Sigmoid colon (tissue), 7 donors: ENCODE measurements at regions of chr10 and their contacts with region 1.

Region 1: DNA sequence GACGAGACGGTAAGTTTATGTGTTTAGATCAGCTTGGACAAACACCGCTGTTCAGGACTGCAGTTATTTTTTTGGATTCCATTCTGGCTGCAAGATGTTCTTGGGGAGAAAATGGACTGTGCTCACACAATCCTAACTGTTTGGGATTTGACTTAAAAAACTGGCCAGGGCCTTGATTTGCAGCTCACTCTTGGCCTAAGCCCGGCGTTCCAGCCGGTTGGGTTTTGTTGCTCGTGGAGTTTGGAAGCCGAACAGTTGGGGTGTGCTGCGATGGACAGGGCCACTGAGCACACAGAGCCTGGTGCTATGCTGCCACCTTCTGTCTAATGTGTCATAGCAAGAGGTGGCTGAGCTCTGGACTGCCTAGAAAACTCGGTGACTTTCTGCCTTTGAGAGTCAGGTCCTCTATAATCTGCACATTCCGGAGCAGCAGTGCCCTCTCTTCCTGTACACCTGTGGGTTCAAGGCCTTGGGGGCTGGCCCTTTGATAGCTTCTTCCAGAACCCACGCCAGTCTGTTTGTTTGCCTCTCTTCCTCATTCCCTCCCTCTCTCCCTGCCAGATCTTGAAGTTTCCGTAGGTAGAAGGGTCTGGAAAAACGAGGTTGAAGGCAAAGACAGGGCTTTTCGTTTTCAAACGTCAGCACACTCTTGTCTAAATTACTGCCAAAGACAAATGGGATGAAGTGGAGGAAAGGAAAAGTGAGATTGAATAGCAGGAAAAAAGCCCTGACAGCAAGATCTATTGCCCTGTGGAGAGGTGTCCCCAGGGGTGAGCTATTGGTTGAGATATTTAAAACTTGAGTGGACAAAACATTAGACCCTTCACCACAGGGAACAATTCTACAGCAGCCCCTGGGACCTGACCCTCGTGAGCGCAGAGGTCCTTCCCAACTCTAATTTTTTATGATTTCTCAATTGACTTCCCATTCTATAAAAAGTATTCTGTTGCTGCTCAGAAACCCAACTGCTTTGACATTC is 167.5 kb upstream of the HABP2 start:
- DNase-seq: peak; percentile 96
- H3K4me3 ChIP-seq: no peak overlapping the region
- H3K27ac ChIP-seq: peak overlapping the region; percentile 11 to 54 (median 42)
- H3K4me1 ChIP-seq: peaks cover 0 to 56% (median 34%) of the 10 kb centered on the region in 4 donors
- H3K27me3 ChIP-seq: no peaks in the 10 kb centered on the region
- CTCF ChIP-seq: peak; percentile 74 to 83 (median 80)
- EP300 ChIP-seq: no peak
- POLR2A ChIP-seq: no peak

Region 2: GRCh38 chr10:112475575-112476218 is 909.6 kb before region 1 on chr10:
- intact Hi-C with region 1: loop called (anchors 5 kb)
- DNase-seq: no peak
- H3K4me3 ChIP-seq: no peak overlapping the region
- H3K27ac ChIP-seq: no peak overlapping the region
- H3K4me1 ChIP-seq: peaks cover 0 to 9% (median 0%) of the 10 kb centered on the region in 4 donors
- H3K27me3 ChIP-seq: no peaks in the 10 kb centered on the region
- CTCF ChIP-seq: peak in 1 of 4 experiments; percentile 14
- EP300 ChIP-seq: no peak
- POLR2A ChIP-seq: no peak

Region 3: DNA sequence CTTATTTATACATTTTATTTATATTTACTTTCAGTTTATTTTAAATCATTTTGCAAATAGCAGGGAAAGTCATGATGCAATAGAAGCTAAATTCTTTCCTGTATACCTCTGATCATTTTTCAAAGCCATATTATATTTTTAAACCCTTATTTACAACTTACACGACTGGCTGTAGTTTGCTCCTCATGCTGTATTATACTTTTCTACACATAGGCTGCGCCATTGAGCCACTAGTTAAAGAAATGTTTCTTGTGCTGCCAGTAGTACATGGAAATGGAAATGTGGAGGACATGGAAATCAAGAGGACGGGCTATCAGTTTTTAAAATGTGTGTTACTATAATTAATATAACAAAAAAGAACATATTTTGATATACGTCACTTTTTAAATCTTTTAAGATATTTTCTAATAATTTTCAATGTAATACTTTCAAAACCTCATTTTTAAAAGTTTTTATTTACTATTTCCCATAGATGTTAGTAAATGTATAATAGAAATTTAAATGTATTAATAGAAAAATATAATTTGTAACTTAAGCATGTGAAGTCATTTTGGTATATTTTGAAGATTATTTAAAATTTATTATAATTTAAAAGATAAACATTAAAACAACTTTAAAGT is 819.8 kb before region 1 on chr10:
- intact Hi-C with region 1: loop called (anchors 5 kb)
- DNase-seq: no peak
- H3K4me3 ChIP-seq: no peak overlapping the region
- H3K27ac ChIP-seq: no peak overlapping the region
- H3K4me1 ChIP-seq: no peaks in the 10 kb centered on the region
- H3K27me3 ChIP-seq: no peaks in the 10 kb centered on the region
- CTCF ChIP-seq: peak; percentile 24 to 73 (median 65)
- EP300 ChIP-seq: no peak
- POLR2A ChIP-seq: no peak

Region 4: GRCh38 chr10:112721080-112721698 is 664.1 kb before region 1 on chr10:
- intact Hi-C with region 1: loop called (anchors 5 kb)
- DNase-seq: no peak
- H3K4me3 ChIP-seq: no peak overlapping the region
- H3K27ac ChIP-seq: no peak overlapping the region
- H3K4me1 ChIP-seq: peaks cover 0 to 4% (median 0%) of the 10 kb centered on the region in 4 donors
- H3K27me3 ChIP-seq: no peaks in the 10 kb centered on the region
- CTCF ChIP-seq: peak; percentile 27 to 60 (median 48)
- EP300 ChIP-seq: no peak
- POLR2A ChIP-seq: no peak

Region 5: GRCh38 chr10:113126229-113127201 is 258.8 kb before region 1 on chr10:
- intact Hi-C with region 1: loop called (anchors 2 kb)
- DNase-seq: peak; percentile 86
- H3K4me3 ChIP-seq: peak overlapping the region in 3 of 4 donors; percentile 33 to 44 (median 39)
- H3K27ac ChIP-seq: peak overlapping the region in 2 of 4 donors; percentile 11 to 29
- H3K4me1 ChIP-seq: peaks cover 0 to 23% (median 17%) of the 10 kb centered on the region in 4 donors
- H3K27me3 ChIP-seq: no peaks in the 10 kb centered on the region
- CTCF ChIP-seq: peak in 1 of 4 experiments; percentile 83
- EP300 ChIP-seq: no peak
- POLR2A ChIP-seq: no peak

Region 6: GRCh38 chr10:113216102-113216501 is 169.2 kb before region 1 on chr10:
- intact Hi-C with region 1: loop called (anchors 10 kb)
- DNase-seq: no peak
- H3K4me3 ChIP-seq: no peak overlapping the region
- H3K27ac ChIP-seq: no peak overlapping the region
- H3K4me1 ChIP-seq: no peaks in the 10 kb centered on the region
- H3K27me3 ChIP-seq: no peaks in the 10 kb centered on the region
- CTCF ChIP-seq: no peak
- EP300 ChIP-seq: no peak
- POLR2A ChIP-seq: no peak

Region 7: GRCh38 chr10:113415246-113415645 is 29.9 kb after region 1 on chr10:
- intact Hi-C with region 1: no loop called
- DNase-seq: no peak
- H3K4me3 ChIP-seq: no peak overlapping the region
- H3K27ac ChIP-seq: no peak overlapping the region
- H3K4me1 ChIP-seq: no peaks in the 10 kb centered on the region
- H3K27me3 ChIP-seq: no peaks in the 10 kb centered on the region
- CTCF ChIP-seq: no peak
- EP300 ChIP-seq: no peak
- POLR2A ChIP-seq: no peak

Region 8: DNA sequence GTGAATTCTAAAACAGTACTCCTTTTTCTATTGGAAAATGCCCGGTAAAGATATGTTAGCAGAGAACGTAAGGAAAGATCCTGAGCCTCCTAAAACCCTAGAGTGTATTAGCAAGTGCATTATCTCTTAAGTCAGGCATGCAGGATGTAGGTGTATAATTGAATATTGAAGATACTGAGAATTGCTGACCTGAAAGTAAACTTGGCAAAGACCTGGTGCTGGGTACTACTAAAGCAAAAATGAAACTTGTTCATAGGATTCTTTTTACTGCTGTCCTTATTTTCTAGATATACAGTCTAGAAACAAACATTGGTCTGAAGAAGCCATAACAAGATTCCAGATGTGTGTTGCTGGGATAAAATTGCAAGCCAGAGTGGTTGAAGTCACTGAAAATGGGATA is 835.0 kb after region 1 on chr10:
- intact Hi-C with region 1: no loop called
- DNase-seq: no peak
- H3K4me3 ChIP-seq: no peak overlapping the region
- H3K27ac ChIP-seq: no peak overlapping the region
- H3K4me1 ChIP-seq: no peaks in the 10 kb centered on the region
- H3K27me3 ChIP-seq: no peaks in the 10 kb centered on the region
- CTCF ChIP-seq: no peak
- EP300 ChIP-seq: no peak
- POLR2A ChIP-seq: no peak